ENCODE measurements at regions of chr1 and their contacts with region 1.

Region 1: GRCh38 chr1:66831529-66832239 is 30.6 kb upstream of the INSL5 start:
- DNase-seq: no peak
- ATAC-seq: no peak
- H3K4me3 Mint-ChIP-seq: no peak overlapping the region
- H3K27ac Mint-ChIP-seq: no peak overlapping the region
- H3K4me1 Mint-ChIP-seq: no peaks in the 10 kb centered on the region
- H3K27me3 Mint-ChIP-seq: peaks cover 1% of the 10 kb centered on the region
- CTCF ChIP-seq: no peak

Region 2: DNA sequence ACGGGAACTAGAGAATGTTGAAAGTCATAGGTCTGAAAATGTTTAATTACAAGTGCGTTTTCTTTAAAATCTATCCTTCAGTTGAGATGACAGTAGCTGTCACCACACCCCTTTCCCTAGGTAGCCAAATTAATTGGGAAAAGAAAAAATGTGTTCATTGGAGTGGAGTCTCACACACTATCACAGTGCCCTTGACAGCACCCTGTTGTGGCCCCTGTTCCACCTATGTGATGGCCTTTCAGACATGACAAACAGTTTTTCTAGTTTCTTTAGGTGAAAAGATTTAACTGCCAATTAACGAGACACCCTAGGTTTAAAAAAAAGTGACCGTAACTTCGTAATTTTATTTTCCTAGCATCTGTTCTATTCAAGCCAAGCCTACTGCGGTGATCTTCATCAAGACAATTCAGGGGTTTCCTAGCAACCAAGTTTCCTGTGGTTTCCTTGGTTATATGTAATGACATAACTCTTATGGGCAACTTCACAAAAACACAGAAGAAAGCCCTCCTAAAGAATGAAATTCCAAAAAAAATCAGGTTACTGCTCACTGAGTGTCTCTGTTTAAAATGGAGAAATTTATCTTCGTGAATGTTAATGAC is 740.7 kb before region 1 on chr1:
- CTCF ChIA-PET with region 1: no interaction called
- POLR2A ChIA-PET with region 1: no interaction called
- intact Hi-C with region 1: no loop called
- DNase-seq: no peak
- ATAC-seq: no peak
- H3K4me3 Mint-ChIP-seq: no peak overlapping the region
- H3K27ac Mint-ChIP-seq: no peak overlapping the region
- H3K4me1 Mint-ChIP-seq: no peaks in the 10 kb centered on the region
- H3K27me3 Mint-ChIP-seq: peaks cover 2% of the 10 kb centered on the region
- CTCF ChIP-seq: no peak

Region 3: DNA sequence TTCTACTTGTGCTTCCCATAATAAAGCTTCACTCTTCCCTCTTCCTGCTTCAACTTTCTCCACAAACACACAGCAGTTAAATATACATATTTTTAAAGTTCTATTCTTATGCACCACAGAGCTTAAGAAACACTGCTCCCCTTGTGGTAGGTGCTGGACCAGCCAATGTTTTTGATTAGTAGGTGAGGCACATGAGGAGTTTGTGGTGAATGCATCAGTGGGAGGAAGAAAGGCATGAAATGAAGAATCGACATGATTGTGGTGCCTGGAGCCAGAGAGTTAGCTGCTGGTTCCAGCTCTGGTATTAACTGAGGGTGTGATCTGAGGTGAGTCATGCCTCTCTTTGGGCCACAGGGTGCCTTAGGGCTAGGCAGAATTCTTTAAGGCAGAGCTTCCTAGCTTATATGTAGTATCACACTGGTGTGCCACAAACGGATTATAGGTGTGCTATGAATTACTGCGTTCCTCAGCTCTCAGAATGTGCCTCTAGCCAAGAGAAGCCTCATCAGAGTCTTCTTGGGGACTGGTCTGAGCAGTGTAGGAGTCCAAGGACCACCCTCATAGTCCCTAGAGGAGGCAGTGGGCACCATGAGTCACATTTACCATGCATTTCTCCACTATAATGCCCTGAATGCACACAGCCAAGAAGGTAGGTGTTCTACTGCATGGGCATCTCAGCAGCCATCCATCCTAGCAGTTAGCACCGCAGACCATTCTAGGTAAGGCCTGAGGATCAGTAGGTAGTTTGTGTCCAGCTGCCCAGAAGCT is 395.1 kb before region 1 on chr1:
- CTCF ChIA-PET with region 1: no interaction called
- POLR2A ChIA-PET with region 1: interaction called, 19 read pairs
- intact Hi-C with region 1: no loop called
- DNase-seq: no peak
- ATAC-seq: peak; percentile 65
- H3K4me3 Mint-ChIP-seq: no peak overlapping the region
- H3K27ac Mint-ChIP-seq: peak overlapping the region; percentile 63
- H3K4me1 Mint-ChIP-seq: peaks cover 38% of the 10 kb centered on the region
- H3K27me3 Mint-ChIP-seq: no peaks in the 10 kb centered on the region
- CTCF ChIP-seq: no peak